ENCODE measurements at regions of chr10 and their contacts with region 1.

Region 1: GRCh38 chr10:132452631-132453469 is 55.9 kb downstream of the PWWP2B start:
- DNase-seq: peak in 1 of 2 donors; percentile 88
- H3K4me3 ChIP-seq: peak overlapping the region in 1 of 2 donors; percentile 12
- H3K27ac ChIP-seq: no peak overlapping the region
- H3K4me1 ChIP-seq: peaks cover 0 to 12% of the 10 kb centered on the region in 2 donors
- H3K27me3 ChIP-seq: no peaks in the 10 kb centered on the region
- CTCF ChIP-seq: peak; percentile 89 to 98 (median 97)

Region 2: DNA sequence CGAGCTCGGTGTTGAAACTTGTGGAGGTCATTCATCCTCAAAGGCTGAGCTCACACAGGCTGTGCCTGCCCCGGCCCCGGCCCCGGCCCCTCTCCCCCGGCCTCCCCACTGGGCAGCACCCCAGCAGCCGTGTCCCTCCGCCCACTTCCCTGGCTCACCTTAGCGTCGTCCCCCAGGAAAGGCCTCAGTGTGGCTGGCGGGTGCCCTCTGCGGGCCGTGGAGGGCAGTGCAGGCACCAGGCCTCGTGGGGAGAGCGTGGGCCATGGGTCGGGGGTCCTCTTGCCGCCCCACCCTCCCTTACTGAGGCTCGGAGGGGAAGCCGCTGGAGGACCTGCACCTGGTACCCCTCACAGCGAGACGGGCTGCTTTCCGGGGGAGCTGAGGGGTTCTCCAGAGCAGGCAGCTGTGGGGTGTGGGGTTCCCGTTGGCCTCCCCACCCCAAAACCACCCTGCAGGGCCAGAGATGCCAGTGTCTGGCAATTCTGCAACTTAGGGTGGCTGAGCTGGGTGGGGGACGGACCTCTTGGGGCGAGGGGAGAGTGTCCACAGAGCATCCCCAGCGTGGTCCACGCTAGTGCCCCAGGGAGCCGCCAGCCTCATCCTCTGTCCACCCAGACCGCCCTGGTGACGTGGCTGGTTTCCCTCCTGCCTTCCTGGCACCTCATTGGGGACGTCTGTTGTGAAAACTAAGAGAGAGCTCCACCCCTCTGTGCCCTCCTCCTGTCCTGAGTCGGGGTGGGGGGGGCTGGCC is 310.3 kb before region 1 on chr10:
- intact Hi-C with region 1: loop called (anchors 10 kb)
- DNase-seq: no peak
- H3K4me3 ChIP-seq: no peak overlapping the region
- H3K27ac ChIP-seq: no peak overlapping the region
- H3K4me1 ChIP-seq: no peaks in the 10 kb centered on the region
- H3K27me3 ChIP-seq: no peaks in the 10 kb centered on the region
- CTCF ChIP-seq: peak; percentile 20 to 79 (median 59)

Region 3: GRCh38 chr10:132223156-132223590 is 229.7 kb before region 1 on chr10:
- intact Hi-C with region 1: loop called (anchors 1 kb)
- DNase-seq: peak; percentile 24 to 82
- H3K4me3 ChIP-seq: no peak overlapping the region
- H3K27ac ChIP-seq: no peak overlapping the region
- H3K4me1 ChIP-seq: no peaks in the 10 kb centered on the region
- H3K27me3 ChIP-seq: no peaks in the 10 kb centered on the region
- CTCF ChIP-seq: peak; percentile 52 to 92 (median 91)

Region 4: DNA sequence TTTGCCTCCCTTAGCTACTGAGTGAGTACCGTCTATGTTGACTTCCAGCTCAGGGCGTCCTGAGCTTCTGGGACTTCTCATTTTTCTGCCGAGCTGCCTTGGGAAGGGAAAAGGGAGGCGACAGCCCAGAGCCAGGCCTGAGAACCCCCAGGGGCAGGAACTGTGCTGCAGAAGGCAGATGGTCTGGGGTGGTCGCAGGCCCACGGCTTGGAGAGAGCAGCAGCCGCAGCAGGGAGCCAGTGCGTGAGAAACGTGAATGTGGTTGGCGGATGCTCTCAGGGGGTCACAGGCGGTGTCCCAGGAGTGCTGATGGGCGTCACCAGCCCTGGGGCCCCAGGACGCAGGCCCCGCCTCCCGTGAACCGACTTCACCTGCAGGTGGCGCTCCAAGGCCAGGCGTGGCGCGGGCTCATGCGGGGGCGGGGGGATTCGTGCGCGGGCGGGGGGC is 65.1 kb before region 1 on chr10:
- intact Hi-C with region 1: loop called (anchors 1 kb)
- DNase-seq: peak in 1 of 2 donors; percentile 9
- H3K4me3 ChIP-seq: peak overlapping the region in 1 of 2 donors; percentile 20
- H3K27ac ChIP-seq: no peak overlapping the region
- H3K4me1 ChIP-seq: peaks cover 0 to 3% of the 10 kb centered on the region in 2 donors
- H3K27me3 ChIP-seq: no peaks in the 10 kb centered on the region
- CTCF ChIP-seq: peak; percentile 64 to 75 (median 69)

Region 5: DNA sequence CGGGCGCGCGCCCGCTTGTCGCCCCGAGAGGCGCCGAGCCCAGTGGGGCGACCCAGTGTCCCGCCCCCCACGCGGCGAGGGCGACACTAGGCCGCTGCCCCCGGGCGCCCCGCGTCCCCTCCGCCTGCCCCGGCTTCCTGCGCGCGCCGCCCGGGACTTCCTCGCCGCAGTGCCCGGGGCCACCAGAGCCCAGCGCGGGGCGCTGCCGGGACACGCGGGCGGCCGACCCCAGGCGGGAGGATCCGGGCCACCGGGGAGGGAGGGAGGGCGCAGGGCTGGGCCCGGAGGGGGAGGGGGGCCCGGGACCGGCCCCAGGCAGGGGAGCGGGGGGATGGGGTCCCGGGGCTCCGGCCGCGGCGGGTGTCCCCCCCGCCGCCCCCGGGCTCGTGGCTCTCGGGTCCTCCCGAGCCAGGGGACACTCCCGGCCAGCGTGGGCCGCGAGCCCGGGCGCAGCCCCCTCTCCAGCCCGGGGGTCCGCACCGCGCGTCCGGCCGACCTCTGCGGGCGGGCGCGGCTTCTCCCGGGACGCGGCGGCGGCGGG is 56.3 kb before region 1 on chr10:
- intact Hi-C with region 1: loop called (anchors 2 kb)
- DNase-seq: peak in 1 of 2 donors; percentile 81
- H3K4me3 ChIP-seq: peak overlapping the region; percentile 74 to 90
- H3K27ac ChIP-seq: peak overlapping the region; percentile 91 to 95
- H3K4me1 ChIP-seq: peaks cover 3 to 26% of the 10 kb centered on the region in 2 donors
- H3K27me3 ChIP-seq: no peaks in the 10 kb centered on the region
- CTCF ChIP-seq: peak; percentile 13 to 53 (median 32)

Region 6: GRCh38 chr10:132421392-132421877 is 31.4 kb before region 1 on chr10:
- intact Hi-C with region 1: loop called (anchors 2 kb)
- DNase-seq: peak; percentile 58 to 89
- H3K4me3 ChIP-seq: peak overlapping the region; percentile 18 to 56
- H3K27ac ChIP-seq: peak overlapping the region; percentile 84 to 86
- H3K4me1 ChIP-seq: peaks cover 13 to 31% of the 10 kb centered on the region in 2 donors
- H3K27me3 ChIP-seq: no peaks in the 10 kb centered on the region
- CTCF ChIP-seq: no peak

Measured in ascending aorta (tissue), 2 donors.